ENCODE measurements at regions of chr1 and their contacts with region 1.

Region 1: DNA sequence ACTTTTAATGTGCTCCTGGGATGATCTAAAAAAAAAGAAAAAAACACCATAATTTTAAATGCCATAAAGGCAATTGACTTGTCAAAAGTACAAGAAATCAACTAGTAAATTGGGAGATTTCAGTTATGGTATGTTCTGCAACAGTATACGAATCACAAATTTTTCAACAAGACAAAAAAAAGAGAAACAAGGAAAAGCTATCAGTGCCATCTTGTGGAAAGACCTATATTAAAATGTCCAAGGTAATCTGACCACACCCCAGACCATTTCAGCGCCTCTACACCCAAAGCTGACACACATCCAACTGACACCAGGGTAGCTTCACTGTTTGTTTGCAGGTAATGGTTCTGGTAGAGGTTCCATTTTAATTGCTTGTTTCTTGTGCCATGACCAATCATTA is 5.0 kb upstream of the DUSP23 start:
- DNase-seq: peak; percentile 81
- H3K4me3 Mint-ChIP-seq: no peak overlapping the region
- H3K27ac Mint-ChIP-seq: peak overlapping the region; percentile 89
- H3K4me1 Mint-ChIP-seq: peaks cover 68% of the 10 kb centered on the region
- H3K27me3 Mint-ChIP-seq: no peaks in the 10 kb centered on the region
- CTCF ChIP-seq: peak; percentile 63

Region 2: GRCh38 chr1:159197561-159198557 is 577.9 kb before region 1 on chr1:
- CTCF ChIA-PET with region 1: interaction called, 92 read pairs
- POLR2A ChIA-PET with region 1: interaction called, 7 read pairs
- intact Hi-C with region 1: loop called (anchors 1 kb)
- DNase-seq: peak; percentile 88
- H3K4me3 Mint-ChIP-seq: no peak overlapping the region
- H3K27ac Mint-ChIP-seq: no peak overlapping the region
- H3K4me1 Mint-ChIP-seq: peaks cover 32% of the 10 kb centered on the region
- H3K27me3 Mint-ChIP-seq: no peaks in the 10 kb centered on the region
- CTCF ChIP-seq: peak; percentile 95

Region 3: GRCh38 chr1:159250638-159251216 is 525.0 kb before region 1 on chr1:
- CTCF ChIA-PET with region 1: interaction called, 10 read pairs
- POLR2A ChIA-PET with region 1: interaction called, 4 read pairs
- intact Hi-C with region 1: no loop called
- DNase-seq: no peak
- H3K4me3 Mint-ChIP-seq: no peak overlapping the region
- H3K27ac Mint-ChIP-seq: peak overlapping the region; percentile 84
- H3K4me1 Mint-ChIP-seq: peaks cover 25% of the 10 kb centered on the region
- H3K27me3 Mint-ChIP-seq: no peaks in the 10 kb centered on the region
- CTCF ChIP-seq: no peak

Region 4: GRCh38 chr1:159598196-159598595 is 177.5 kb before region 1 on chr1:
- CTCF ChIA-PET with region 1: no interaction called
- POLR2A ChIA-PET with region 1: no interaction called
- intact Hi-C with region 1: loop called (anchors 2 kb)
- DNase-seq: peak; percentile 91
- H3K4me3 Mint-ChIP-seq: peak overlapping the region; percentile 2
- H3K27ac Mint-ChIP-seq: peak overlapping the region; percentile 75
- H3K4me1 Mint-ChIP-seq: peaks cover 66% of the 10 kb centered on the region
- H3K27me3 Mint-ChIP-seq: no peaks in the 10 kb centered on the region
- CTCF ChIP-seq: no peak